Activated naive CD4-positive, alpha-beta T cell treated with anti-CD3 and anti-CD28 coated beads, Interleukin-2, amount 10 ng/mL, durations not matched to agents 7 days and 5 days (primary cell): ENCODE measurements at regions of chr12 and their contacts with region 1.

Region 1: GRCh38 chr12:50055831-50056638 is 1.4 kb upstream of the ASIC1 start:
- DNase-seq: peak; percentile 72
- H3K4me3 Mint-ChIP-seq: peak overlapping the region; percentile 14
- H3K27ac Mint-ChIP-seq: no peak overlapping the region
- H3K4me1 Mint-ChIP-seq: peaks cover 36% of the 10 kb centered on the region
- H3K27me3 Mint-ChIP-seq: peaks cover 73% of the 10 kb centered on the region

Region 2: DNA sequence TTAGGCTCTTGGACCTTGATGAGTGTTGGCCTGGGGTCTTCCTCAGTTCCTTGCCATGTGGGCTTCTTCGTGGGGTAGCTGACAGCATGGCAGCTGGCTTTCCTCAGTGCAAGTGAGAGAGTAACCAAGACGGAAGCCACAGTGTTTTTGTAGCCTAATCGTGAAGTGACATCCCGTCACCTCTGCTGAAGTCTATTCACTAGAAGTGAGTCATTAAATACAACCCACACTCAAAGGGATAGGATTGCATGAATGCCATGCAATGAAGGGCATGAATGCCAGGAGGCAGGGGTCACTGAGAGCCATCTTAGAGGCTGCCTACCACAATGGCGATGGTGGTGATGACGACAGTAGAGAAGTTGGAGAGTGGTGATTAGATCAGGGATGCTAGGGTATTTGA is 12.2 kb before region 1 on chr12:
- CTCF ChIA-PET with region 1: interaction called, 94 read pairs
- DNase-seq: no peak
- H3K4me3 Mint-ChIP-seq: no peak overlapping the region
- H3K27ac Mint-ChIP-seq: no peak overlapping the region
- H3K4me1 Mint-ChIP-seq: peaks cover 3% of the 10 kb centered on the region
- H3K27me3 Mint-ChIP-seq: peaks cover 26% of the 10 kb centered on the region

Region 3: DNA sequence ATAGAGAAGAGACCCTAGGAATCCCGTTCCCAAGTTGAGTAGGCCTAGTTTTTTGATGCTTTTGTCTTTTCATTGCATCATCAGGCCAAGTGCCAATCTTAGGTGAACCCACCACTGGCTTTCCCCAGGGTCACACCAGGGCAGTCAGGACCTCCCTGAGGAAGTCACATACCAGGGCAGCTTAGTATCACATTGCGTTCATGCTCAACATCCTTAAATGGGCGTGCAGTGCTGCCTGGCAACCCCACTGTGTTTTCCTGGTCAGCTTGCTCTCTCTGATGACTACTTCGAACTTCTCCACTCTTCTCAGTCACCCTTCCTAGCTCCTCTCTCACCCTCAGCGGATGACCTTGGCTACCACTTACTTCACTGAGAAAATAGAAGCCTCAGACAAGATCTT is 10.4 kb after region 1 on chr12:
- CTCF ChIA-PET with region 1: interaction called, 50 read pairs
- DNase-seq: no peak
- H3K4me3 Mint-ChIP-seq: no peak overlapping the region
- H3K27ac Mint-ChIP-seq: no peak overlapping the region
- H3K4me1 Mint-ChIP-seq: peaks cover 12% of the 10 kb centered on the region
- H3K27me3 Mint-ChIP-seq: peaks cover 39% of the 10 kb centered on the region

Region 4: GRCh38 chr12:50074936-50075807 is 19.1 kb after region 1 on chr12:
- CTCF ChIA-PET with region 1: interaction called, 50 read pairs
- DNase-seq: peak; percentile 88
- H3K4me3 Mint-ChIP-seq: no peak overlapping the region
- H3K27ac Mint-ChIP-seq: no peak overlapping the region
- H3K4me1 Mint-ChIP-seq: peaks cover 7% of the 10 kb centered on the region
- H3K27me3 Mint-ChIP-seq: peaks cover 41% of the 10 kb centered on the region

Region 5: DNA sequence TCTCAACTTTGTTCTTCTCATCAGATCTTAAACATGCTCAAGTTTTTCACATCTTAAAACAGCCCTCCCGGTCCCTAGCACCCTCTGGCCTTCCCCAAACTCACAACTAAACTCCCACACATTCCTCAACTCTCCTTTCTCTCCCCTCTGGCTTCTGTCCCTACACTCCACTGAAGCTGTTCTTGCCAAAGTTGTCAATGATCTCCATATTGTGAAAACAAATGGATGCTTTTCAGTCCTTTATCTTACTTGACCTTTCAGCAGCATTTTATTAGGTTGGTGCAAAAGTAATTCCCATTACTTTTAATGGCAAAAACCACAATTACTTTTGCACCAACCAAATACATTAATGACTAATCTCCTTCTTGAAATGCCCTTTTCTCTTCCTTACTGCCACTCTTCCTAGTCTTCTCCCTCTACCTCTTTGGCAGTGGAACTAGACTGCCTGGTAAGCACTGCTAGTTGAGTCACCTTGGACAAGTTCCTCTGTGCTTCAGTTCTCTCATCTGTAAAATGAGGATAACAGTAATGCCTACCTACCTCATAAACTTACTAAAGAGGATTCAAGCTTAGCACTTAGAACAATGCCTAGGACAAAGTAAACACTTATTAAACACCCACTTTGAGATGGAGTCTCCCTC is 95.1 kb after region 1 on chr12:
- CTCF ChIA-PET with region 1: no interaction called
- DNase-seq: no peak
- H3K4me3 Mint-ChIP-seq: no peak overlapping the region
- H3K27ac Mint-ChIP-seq: no peak overlapping the region
- H3K4me1 Mint-ChIP-seq: peaks cover 4% of the 10 kb centered on the region
- H3K27me3 Mint-ChIP-seq: no peaks in the 10 kb centered on the region